ENCODE measurements at regions of chr3 and their contacts with region 1.

Region 1: DNA sequence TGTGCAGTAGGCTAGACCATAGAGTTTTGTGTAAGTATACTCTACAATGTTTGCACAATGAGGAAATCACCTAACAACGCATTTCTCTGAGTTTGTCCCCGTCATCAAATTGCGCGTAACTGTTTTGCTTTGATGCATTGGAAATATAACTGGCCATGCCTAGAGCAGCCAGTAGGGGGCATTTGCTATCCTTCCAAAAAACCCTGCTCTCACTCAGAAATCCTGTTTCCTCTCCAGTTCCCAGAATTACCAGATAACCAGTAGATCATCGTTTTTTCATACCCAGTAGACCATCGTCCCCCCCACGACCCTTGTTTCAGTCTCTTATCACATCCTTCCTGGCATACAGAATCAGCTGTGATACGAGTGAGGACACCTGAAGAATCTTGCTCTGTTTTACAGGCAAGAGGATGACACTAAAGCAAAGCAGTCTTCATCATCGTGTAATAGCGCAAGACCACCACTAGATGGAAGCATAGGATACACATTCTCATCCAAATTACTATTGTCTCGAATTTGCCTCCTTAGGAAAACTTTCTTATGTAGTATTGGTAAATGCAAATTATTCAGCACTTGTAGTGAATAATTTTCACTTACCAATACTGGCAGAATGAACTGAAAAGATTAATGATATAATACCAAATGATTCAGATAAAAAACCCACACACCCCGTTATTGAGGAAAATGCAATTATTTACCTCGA is 4.4 kb upstream of the GABRR3 start:
- DNase-seq: peak; percentile 53 to 70
- H3K4me3 ChIP-seq: 0 out of 2 replicates have a peak overlapping the region, but pooled peaks have one; percentile 20
- H3K4me3 Mint-ChIP-seq: peak overlapping the region; percentile 72
- H3K27ac Mint-ChIP-seq: no peak overlapping the region
- H3K4me1 ChIP-seq: no peaks in the 10 kb centered on the region
- H3K4me1 Mint-ChIP-seq: no peaks in the 10 kb centered on the region
- H3K27me3 ChIP-seq: no peaks in the 10 kb centered on the region
- H3K27me3 Mint-ChIP-seq: peaks cover 3% of the 10 kb centered on the region
- CTCF ChIP-seq: peak; percentile 77 to 92

Region 2: GRCh38 chr3:97971677-97972567 is 67.6 kb before region 1 on chr3 and contains the start of gene RIOX2:
- CTCF ChIA-PET with region 1: no interaction called
- POLR2A ChIA-PET with region 1: no interaction called
- intact Hi-C with region 1: no loop called
- DNase-seq: peak; percentile 76 to 78
- H3K4me3 ChIP-seq: peak within 1 kb of the TSS; percentile 81
- H3K4me3 Mint-ChIP-seq: peak within 1 kb of the TSS; percentile 88
- H3K27ac Mint-ChIP-seq: peak within 1 kb of the TSS; percentile 94
- H3K4me1 ChIP-seq: peaks cover 20% of the 10 kb centered on the region
- H3K4me1 Mint-ChIP-seq: peaks cover 13% of the 10 kb centered on the region
- H3K27me3 ChIP-seq: no peaks in the 10 kb centered on the region
- H3K27me3 Mint-ChIP-seq: no peaks in the 10 kb centered on the region
- CTCF ChIP-seq: peak in 1 of 2 experiments; percentile 12
- total RNA-seq, gene RIOX2: 25.0 TPM in 2 replicates

Region 3: DNA sequence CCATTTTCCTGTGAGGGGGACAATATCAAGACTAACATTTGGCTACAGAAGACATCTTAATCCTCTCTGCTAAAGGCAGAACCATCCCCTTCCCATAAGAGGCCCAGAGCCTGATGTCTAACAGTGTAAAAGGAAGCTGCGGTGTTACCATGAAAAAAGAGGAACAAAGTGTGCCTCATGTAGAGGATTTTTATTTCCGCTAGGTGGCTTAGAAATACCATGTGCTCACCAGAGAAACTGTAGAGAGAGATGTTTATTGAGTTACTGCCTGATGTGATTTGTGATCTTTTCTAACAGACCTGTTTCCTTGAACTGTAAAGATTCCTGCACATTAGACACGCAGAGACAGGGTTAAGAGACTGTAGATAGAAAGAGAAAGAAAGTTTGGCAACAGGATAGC is 149.1 kb after region 1 on chr3:
- CTCF ChIA-PET with region 1: no interaction called
- POLR2A ChIA-PET with region 1: no interaction called
- intact Hi-C with region 1: loop called (anchors 1 kb)
- DNase-seq: no peak
- H3K4me3 ChIP-seq: no peak overlapping the region
- H3K4me3 Mint-ChIP-seq: no peak overlapping the region
- H3K27ac Mint-ChIP-seq: no peak overlapping the region
- H3K4me1 ChIP-seq: no peaks in the 10 kb centered on the region
- H3K4me1 Mint-ChIP-seq: no peaks in the 10 kb centered on the region
- H3K27me3 ChIP-seq: no peaks in the 10 kb centered on the region
- H3K27me3 Mint-ChIP-seq: peaks cover 3% of the 10 kb centered on the region
- CTCF ChIP-seq: peak in 1 of 2 experiments; percentile 39

Region 4: DNA sequence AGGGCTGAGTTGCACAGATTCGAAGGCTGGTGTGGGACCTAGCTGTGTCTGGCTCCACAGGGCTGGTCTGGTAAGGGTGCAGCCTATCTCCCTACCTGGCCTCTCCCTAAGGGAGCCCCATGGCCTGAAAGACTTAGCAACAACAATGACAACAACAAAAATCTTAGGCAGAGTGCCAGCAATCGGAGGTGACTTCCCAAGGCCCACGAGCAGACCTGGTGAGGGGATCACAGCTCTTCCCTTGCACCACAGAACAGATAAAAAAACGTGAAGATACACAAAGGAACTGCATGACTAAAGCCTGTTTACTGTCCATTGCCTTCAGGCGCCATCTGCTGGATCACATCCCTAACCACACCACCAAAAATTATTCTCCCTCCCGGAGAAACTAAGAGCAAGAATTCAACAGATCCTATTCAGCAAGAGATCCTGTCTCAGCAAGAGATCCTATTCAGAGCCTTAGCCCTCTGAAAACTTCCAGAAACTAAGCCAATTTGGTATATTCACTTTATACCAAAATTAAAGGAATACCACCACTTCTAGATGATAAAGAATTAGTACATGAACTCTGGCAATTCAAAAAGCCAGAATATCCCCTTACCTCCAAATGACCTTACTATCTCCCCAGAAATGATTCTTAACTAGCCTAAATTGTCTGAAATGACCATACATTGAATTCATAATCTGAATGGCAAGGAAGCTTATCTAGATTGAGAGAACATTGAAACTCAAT is 290.1 kb after region 1 on chr3:
- CTCF ChIA-PET with region 1: interaction called, 5 read pairs
- POLR2A ChIA-PET with region 1: no interaction called
- intact Hi-C with region 1: loop called (anchors 1 kb)
- DNase-seq: peak; percentile 38 to 56
- H3K4me3 ChIP-seq: no peak overlapping the region
- H3K4me3 Mint-ChIP-seq: no peak overlapping the region
- H3K27ac Mint-ChIP-seq: no peak overlapping the region
- H3K4me1 ChIP-seq: no peaks in the 10 kb centered on the region
- H3K4me1 Mint-ChIP-seq: peaks cover 13% of the 10 kb centered on the region
- H3K27me3 ChIP-seq: no peaks in the 10 kb centered on the region
- H3K27me3 Mint-ChIP-seq: peaks cover 3% of the 10 kb centered on the region
- CTCF ChIP-seq: peak; percentile 63 to 69

Region 5: GRCh38 chr3:98343647-98344507 is 304.4 kb after region 1 on chr3:
- CTCF ChIA-PET with region 1: no interaction called
- POLR2A ChIA-PET with region 1: no interaction called
- intact Hi-C with region 1: loop called (anchors 1 kb)
- DNase-seq: peak; percentile 47 to 72
- H3K4me3 ChIP-seq: no peak overlapping the region
- H3K4me3 Mint-ChIP-seq: no peak overlapping the region
- H3K27ac Mint-ChIP-seq: no peak overlapping the region
- H3K4me1 ChIP-seq: no peaks in the 10 kb centered on the region
- H3K4me1 Mint-ChIP-seq: no peaks in the 10 kb centered on the region
- H3K27me3 ChIP-seq: no peaks in the 10 kb centered on the region
- H3K27me3 Mint-ChIP-seq: peaks cover 5% of the 10 kb centered on the region
- CTCF ChIP-seq: peak; percentile 62 to 77